Dorsolateral prefrontal cortex (tissue), 120 donors: ENCODE measurements at regions of chrX and their contacts with region 1.

Region 1: GRCh38 chrX:18674788-18675735 is 3.2 kb upstream of the RS1 start:
- DNase-seq: peak; percentile 52 to 79 (median 68)
- H3K4me3 ChIP-seq: peak overlapping the region; percentile 29 to 81 (median 68)
- H3K27ac ChIP-seq: peak overlapping the region in 58 of 59 donors; percentile 2 to 92 (median 74)
- H3K27me3 ChIP-seq: peaks cover 0 to 11% (median 0%) of the 10 kb centered on the region in 45 donors
- CTCF ChIP-seq: peak in 2 of 56 donors; percentile 9 to 20

Region 2: DNA sequence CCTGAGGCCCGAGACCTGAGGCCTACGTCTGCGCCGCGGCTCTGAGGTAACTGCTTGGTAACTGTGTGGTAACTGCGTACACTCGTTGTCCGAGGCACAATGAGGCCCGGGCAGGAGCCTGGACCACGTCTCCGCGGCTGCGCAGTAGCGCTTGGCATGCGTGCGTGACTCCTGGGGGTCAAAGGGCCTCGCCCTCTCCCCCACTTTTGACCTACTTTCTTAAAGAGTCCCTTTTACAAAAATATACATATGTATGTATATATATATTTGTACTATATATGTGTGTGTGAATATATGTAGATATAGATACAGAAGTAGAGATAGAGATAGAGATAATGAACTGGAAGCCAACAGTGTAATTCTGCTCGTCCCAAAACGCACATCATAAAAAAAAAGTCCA is 454.3 kb before region 1 on chrX and contains the start of gene BEND2:
- intact Hi-C with region 1: no loop called
- DNase-seq: no peak
- H3K4me3 ChIP-seq: no peak within 1 kb of the TSS
- H3K27ac ChIP-seq: no peak within 1 kb of the TSS
- H3K27me3 ChIP-seq: peaks cover 0 to 10% (median 0%) of the 10 kb centered on the region in 45 donors
- CTCF ChIP-seq: no peak
- total RNA-seq, gene BEND2: not detected

Region 3: GRCh38 chrX:18425199-18426003 is 249.7 kb before region 1 on chrX and contains the start of gene CDKL5:
- intact Hi-C with region 1: loop called in 1 of 2 experiments (anchors 2 kb)
- DNase-seq: peak; percentile 90 to 97 (median 96)
- H3K4me3 ChIP-seq: peak within 1 kb of the TSS; percentile 40 to 87 (median 74)
- H3K27ac ChIP-seq: peak within 1 kb of the TSS in 57 of 59 donors; percentile 26 to 90 (median 78)
- H3K27me3 ChIP-seq: peaks cover 0 to 70% (median 11%) of the 10 kb centered on the region in 45 donors
- CTCF ChIP-seq: peak in 14 of 56 donors; percentile 7 to 40 (median 16)
- total RNA-seq, gene CDKL5: 53.1 to 142 (median 108) TPM

Region 4: DNA sequence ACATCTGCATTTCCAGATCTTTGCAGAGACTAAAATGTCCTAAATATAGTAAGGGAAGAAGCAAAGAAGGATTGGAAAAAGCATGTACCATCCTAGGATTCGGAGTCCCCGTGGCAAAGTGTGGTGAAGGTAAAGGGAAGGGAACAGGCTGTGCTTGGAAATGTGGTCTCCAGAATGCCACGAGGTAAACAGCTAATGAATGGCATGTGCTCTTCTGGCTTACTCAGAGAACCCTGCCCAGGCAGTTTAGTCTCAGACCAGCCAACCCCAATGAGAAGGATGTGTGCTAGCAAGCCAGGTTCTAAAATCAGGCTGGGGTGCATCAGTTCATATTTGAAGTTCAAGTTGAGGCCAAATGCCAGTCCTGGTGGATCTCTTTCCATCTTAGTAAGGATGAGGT is 116.3 kb before region 1 on chrX:
- intact Hi-C with region 1: no loop called
- DNase-seq: no peak
- H3K4me3 ChIP-seq: no peak overlapping the region
- H3K27ac ChIP-seq: no peak overlapping the region
- H3K27me3 ChIP-seq: peaks cover 0 to 30% (median 1%) of the 10 kb centered on the region in 45 donors
- CTCF ChIP-seq: no peak

Region 5: DNA sequence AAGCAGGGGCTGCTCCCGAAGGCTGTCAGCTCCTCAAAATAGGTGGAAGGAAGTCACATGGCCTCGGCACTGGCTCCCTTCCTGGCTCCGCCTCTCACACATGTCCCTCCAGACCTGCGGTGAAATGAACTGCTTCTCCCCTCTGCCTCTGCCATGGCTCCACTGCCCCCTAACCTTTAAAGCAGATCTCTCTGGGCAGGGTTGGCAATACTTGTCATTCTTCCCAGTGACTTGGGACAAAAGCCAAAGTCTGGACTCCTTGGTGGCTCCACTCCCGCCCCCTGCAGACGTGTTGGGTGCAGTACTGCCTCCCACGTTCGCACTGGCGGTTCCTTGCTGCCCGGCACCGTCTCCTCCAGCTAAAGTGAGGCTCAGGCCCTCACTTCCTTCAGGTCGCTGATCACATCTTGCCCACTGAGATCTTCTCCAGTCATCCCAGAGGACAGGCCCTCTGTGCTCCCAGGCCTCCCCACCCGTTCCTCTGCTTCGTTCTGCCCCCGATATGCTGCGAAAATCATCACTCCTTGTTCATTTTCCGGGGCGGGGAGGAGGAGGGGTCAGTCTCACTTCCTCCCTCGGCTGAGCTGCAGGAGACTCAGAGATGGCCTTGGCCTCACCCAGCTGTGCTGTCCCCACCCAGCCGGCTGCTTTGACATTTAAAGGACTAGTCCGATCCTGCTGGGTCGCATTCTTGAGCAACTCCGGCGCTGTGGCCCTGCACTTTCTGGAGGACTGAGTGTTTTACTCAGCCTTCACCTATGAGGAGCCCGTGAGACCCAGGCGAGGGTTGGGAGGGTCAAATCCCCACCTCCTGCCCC is 211.5 kb after region 1 on chrX:
- intact Hi-C with region 1: loop called (anchors 10 kb)
- DNase-seq: peak; percentile 35 to 73 (median 58)
- H3K4me3 ChIP-seq: peak overlapping the region in 55 of 59 donors; percentile 8 to 58 (median 40)
- H3K27ac ChIP-seq: peak overlapping the region in 57 of 59 donors; percentile 16 to 88 (median 77)
- H3K27me3 ChIP-seq: peaks cover 0 to 80% (median 15%) of the 10 kb centered on the region in 45 donors
- CTCF ChIP-seq: peak in 51 of 56 donors; percentile 12 to 62 (median 43)

Region 6: DNA sequence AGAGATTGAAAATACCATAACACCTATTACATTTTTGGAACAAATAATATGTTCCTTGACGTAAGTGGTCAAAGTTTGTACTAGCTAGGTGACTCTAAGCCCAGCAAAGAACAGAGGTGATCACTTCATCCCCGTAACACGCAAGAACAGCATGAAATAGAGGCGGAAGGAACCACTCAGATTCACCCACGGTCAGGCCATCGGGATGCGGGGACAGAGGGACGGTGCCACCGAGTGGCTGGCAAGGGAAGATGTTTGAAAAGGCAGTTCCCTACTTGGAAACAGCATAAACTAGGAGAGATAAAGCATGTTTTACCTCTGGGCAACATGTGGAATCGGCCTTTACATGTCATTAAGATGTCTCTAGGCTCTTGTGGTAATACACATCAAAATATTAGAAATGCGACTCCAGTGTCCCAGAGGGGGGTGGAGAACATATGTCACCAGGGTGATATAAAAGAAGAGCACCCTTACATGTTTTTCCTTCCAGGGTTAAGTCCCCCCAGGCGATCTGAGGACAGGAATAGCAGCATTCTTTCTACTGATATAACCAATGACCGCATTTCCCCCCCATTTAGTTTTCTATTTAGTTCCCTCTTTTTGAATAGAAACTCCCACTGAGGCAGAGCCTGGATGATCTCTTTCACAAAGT is 224.9 kb after region 1 on chrX:
- intact Hi-C with region 1: loop called in 1 of 2 experiments (anchors 10 kb)
- DNase-seq: peak in 3 of 10 donors; percentile 48 to 65 (median 48)
- H3K4me3 ChIP-seq: no peak overlapping the region
- H3K27ac ChIP-seq: peak overlapping the region in 3 of 59 donors; percentile 5 to 46 (median 42)
- H3K27me3 ChIP-seq: peaks cover 0 to 48% (median 6%) of the 10 kb centered on the region in 45 donors
- CTCF ChIP-seq: peak in 49 of 56 donors; percentile 16 to 60 (median 38)

Region 7: DNA sequence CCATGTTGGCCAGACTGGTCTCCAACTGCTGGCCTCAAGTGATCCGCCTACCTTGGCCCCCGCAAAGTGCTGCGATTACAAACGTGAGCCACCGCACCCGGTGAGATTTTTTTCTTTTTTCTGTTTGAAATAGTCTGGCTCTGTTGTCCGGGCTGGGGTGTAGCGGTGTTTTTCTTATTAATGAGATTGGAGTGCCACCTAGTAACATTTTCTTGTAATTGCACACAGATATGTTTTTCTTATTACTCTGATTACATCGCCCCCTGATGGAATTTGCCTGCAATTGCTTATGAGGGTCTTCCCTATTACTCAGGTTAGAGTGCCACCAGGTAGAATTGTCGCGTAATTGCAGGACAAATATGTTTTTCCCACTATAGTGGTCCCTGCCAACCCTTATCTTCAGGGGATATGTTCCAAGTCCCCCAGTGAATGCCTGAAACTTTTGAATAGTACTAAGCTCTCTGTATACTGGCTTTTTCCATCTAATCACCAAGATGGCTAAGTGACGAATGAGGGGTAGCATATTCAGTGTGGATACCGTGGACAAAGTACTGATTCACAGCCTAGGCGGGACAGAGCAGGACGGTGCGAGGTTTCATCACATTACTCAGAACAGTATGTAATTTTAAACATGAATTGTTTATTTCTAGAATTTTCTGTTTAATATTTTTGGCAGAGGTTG is 660.0 kb after region 1 on chrX:
- intact Hi-C with region 1: loop called in 1 of 2 experiments (anchors 10 kb)
- DNase-seq: no peak
- H3K4me3 ChIP-seq: no peak overlapping the region
- H3K27ac ChIP-seq: no peak overlapping the region
- H3K27me3 ChIP-seq: peaks cover 0 to 20% (median 0%) of the 10 kb centered on the region in 45 donors
- CTCF ChIP-seq: peak in 5 of 56 donors; percentile 5 to 23 (median 14)